Common myeloid progenitor, CD34-positive (primary cell): ENCODE measurements at regions of chr11 and their contacts with region 1.

Region 1: GRCh38 chr11:71977743-71978418 is 20.8 kb upstream of the IL18BP start:
- DNase-seq: peak; percentile 68 to 92 (median 88)
- H3K4me3 ChIP-seq: no peak overlapping the region
- H3K27ac ChIP-seq: peak overlapping the region in 1 of 2 experiments; percentile 35
- H3K4me1 ChIP-seq: peaks cover 10 to 25% (median 21%) of the 10 kb centered on the region in 4 experiments
- H3K27me3 ChIP-seq: no peaks in the 10 kb centered on the region

Region 2: DNA sequence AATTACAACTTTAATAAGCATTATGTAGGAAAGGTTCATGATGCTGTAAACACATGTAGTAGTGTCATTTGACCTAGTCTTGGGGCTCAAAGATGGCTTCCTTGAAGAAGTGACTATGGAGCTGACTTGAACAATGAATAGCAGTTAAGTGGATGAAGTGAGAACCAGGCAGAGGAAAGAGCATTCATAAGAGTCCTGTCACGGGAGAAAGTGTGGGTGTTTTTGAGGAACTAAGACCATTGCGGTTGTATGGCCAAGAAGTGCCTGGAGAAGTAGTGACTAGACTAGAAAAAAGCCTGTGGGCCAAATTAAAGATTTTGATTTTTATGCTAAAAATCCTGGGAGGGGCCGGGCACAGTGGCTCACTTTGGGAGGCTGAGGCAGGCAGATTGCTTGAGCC is 13.6 kb after region 1 on chr11:
- CTCF ChIA-PET with region 1: interaction called, 67 read pairs
- POLR2A ChIA-PET with region 1: no interaction called
- DNase-seq: peak; percentile 66 to 93 (median 90)
- H3K4me3 ChIP-seq: no peak overlapping the region
- H3K27ac ChIP-seq: no peak overlapping the region
- H3K4me1 ChIP-seq: peaks cover 0 to 20% (median 9%) of the 10 kb centered on the region in 4 experiments
- H3K27me3 ChIP-seq: no peaks in the 10 kb centered on the region

Region 3: GRCh38 chr11:71998662-71999310 is 20.9 kb after region 1 on chr11 and contains the start of gene IL18BP:
- CTCF ChIA-PET with region 1: interaction called, 21 read pairs
- POLR2A ChIA-PET with region 1: no interaction called
- DNase-seq: peak; percentile 29 to 66 (median 55)
- H3K4me3 ChIP-seq: peak within 1 kb of the TSS in 1 of 7 experiments; percentile 1
- H3K27ac ChIP-seq: no peak within 1 kb of the TSS
- H3K4me1 ChIP-seq: peaks cover 0 to 18% (median 14%) of the 10 kb centered on the region in 4 experiments
- H3K27me3 ChIP-seq: no peaks in the 10 kb centered on the region

Region 4: DNA sequence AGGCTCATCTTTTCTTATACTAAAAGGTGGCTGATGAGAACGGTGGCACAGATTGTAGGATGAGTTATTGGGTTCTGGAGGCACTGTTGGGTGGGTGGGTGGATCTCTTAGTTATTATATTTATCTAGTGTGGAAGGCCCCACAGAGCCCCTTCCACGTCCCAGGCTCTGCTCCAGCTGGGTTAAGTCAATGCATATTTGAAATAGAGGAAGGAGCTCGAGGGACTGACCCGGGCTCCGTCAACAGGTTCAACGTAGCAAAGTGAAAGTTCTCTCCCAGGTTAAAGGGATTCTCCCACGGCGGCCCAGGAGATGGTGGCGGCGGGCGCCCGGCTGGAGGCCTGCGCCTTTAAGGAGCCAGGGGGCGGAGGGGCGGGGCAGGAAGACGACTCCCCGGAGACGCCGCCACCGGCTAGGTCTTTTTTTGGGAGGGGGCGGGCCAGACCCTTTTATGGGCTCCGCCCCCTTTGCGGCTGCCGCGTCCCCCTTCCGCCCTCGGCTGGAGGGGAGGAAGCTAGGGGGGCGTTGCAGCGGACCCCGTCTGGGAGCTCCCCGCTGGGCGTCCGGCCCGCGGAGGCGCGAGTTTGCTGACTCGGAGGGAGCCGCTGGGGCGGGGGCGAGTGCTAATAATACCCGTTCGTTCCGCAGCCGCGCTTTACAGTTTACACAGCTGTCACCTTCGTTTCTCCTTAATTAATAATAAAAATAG is 245.2 kb after region 1 on chr11:
- CTCF ChIA-PET with region 1: no interaction called
- POLR2A ChIA-PET with region 1: no interaction called
- DNase-seq: peak; percentile 95 to 98 (median 97)
- H3K4me3 ChIP-seq: peak overlapping the region; percentile 61 to 95 (median 86)
- H3K27ac ChIP-seq: peak overlapping the region; percentile 50 to 85
- H3K4me1 ChIP-seq: peaks cover 10 to 53% (median 40%) of the 10 kb centered on the region in 4 experiments
- H3K27me3 ChIP-seq: no peaks in the 10 kb centered on the region